ENCODE measurements at regions of chr3 and their contacts with region 1.

Region 1: GRCh38 chr3:72082186-72082715 is 297.3 kb upstream of the PROK2 start:
- DNase-seq: no peak
- ATAC-seq: peak; percentile 81
- H3K4me3 Mint-ChIP-seq: peak overlapping the region; percentile 72
- H3K27ac Mint-ChIP-seq: peak overlapping the region; percentile 71
- H3K4me1 Mint-ChIP-seq: peaks cover 71% of the 10 kb centered on the region
- H3K27me3 Mint-ChIP-seq: peaks cover 12% of the 10 kb centered on the region
- CTCF ChIP-seq: no peak

Region 2: DNA sequence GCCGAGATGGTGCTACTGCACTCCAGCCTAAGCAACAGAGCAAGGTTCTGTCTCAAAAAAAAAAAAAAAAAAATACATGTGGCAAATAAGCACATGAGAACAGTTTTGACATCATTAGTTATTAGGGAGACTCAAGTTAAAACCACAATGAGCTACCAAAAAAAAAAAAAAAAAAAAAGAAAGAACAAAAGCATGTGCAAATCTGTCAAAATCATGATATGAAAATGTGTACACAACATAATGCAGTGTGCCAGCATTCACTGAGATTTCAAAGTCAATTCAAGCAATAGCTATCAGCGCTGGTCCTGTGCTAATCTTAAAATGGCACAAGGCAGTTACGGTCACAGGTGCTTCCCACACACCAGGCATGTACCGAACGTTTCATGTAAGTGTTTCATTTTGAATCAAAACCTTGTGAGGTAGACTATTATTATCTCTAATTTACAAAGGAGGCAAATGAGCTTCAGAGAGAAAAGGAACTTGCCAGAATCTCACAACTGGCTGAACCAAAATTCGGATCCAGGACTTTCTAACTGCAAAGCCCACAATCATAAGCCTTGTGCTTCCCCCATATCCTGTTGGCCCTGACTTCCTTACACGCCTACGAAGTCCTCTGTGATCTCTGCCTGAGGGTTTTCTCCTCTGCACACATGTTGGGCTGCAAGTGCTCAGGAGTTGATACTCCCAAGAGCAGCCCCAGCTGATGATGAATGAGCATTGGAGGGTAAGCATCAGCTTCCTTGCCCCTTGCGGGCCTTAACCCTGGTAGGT is 97.2 kb before region 1 on chr3:
- CTCF ChIA-PET with region 1: no interaction called
- POLR2A ChIA-PET with region 1: no interaction called
- intact Hi-C with region 1: loop called (anchors 2 kb)
- DNase-seq: no peak
- ATAC-seq: peak; percentile 72
- H3K4me3 Mint-ChIP-seq: peak overlapping the region; percentile 62
- H3K27ac Mint-ChIP-seq: no peak overlapping the region
- H3K4me1 Mint-ChIP-seq: peaks cover 56% of the 10 kb centered on the region
- H3K27me3 Mint-ChIP-seq: peaks cover 17% of the 10 kb centered on the region
- CTCF ChIP-seq: no peak

Region 3: GRCh38 chr3:72092778-72093177 is 10.5 kb after region 1 on chr3:
- CTCF ChIA-PET with region 1: no interaction called
- POLR2A ChIA-PET with region 1: interaction called, 4 read pairs
- intact Hi-C with region 1: loop called (anchors 1 kb)
- DNase-seq: no peak
- ATAC-seq: no peak
- H3K4me3 Mint-ChIP-seq: no peak overlapping the region
- H3K27ac Mint-ChIP-seq: peak overlapping the region; percentile 15
- H3K4me1 Mint-ChIP-seq: peaks cover 44% of the 10 kb centered on the region
- H3K27me3 Mint-ChIP-seq: peaks cover 4% of the 10 kb centered on the region
- CTCF ChIP-seq: no peak

Region 4: DNA sequence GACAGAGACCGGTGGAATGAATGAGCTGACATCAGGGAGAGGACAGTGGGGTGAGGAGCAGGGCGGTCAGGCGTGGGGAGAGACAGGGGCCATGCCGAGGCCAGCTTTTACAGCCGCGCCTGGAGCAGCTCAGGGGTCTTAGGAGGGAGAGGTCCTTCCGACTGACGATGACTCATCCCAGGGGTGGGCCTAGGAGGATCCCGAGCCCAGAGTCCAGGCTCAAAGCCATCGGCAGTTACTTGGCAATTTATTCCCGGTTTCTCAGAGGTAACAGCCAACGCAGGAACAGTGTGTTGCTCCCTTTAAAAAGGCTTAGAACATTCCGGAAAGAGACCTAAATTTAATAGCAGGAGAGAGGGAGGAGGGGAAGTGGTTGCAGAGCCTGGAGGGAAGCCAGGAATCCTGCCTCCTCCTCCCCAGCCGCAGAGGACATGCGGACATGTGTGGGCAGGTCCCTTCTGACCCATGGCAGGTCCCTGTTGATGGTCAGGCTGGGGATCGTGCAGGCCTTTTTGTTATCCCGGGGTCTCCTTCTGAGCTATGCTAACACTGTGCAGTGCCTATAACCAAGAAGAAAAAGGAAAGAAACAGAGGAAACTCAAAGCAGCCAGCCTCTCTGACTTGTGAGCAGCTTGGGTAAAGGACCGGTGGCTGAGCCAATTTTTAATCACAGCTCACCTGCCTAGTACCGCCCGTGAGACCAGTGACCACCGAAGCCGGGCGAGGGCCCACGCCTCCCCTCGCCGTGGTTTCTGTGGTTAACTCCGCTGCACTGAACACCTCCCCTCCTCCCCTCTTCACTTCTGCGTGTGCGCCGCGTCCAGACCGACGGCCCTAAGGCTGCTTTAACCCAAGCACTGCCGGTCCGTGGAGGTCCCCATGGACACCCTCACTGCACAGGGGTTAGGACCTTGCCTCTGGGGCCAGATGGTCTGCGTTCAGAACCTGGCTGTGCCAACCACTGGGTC is 95.1 kb after region 1 on chr3:
- CTCF ChIA-PET with region 1: no interaction called
- POLR2A ChIA-PET with region 1: no interaction called
- intact Hi-C with region 1: loop called (anchors 5 kb)
- DNase-seq: peak; percentile 35
- ATAC-seq: peak; percentile 20
- H3K4me3 Mint-ChIP-seq: peak overlapping the region; percentile 79
- H3K27ac Mint-ChIP-seq: peak overlapping the region; percentile 75
- H3K4me1 Mint-ChIP-seq: peaks cover 64% of the 10 kb centered on the region
- H3K27me3 Mint-ChIP-seq: peaks cover 2% of the 10 kb centered on the region
- CTCF ChIP-seq: no peak

Region 5: DNA sequence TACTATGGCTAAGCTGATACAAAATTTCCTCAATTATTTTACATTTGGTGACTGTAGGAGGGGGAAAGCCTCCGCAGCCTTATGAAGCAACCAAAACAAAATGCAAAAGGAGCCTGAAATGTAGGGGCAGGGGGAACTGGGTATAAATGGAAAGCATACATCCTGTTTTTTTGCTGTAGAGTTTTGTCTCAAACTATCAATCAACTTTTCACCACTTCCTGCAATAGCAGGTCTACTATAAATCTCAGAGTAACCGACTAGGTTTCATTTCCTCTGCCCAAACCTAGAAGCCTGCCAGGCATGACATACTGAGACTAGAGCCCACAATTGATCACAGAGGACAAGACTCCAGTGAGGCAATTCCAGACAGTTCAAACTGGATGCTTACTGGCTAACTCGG is 674.6 kb after region 1 on chr3:
- CTCF ChIA-PET with region 1: no interaction called
- POLR2A ChIA-PET with region 1: no interaction called
- intact Hi-C with region 1: loop called (anchors 5 kb)
- DNase-seq: no peak
- ATAC-seq: peak; percentile 99
- H3K4me3 Mint-ChIP-seq: peak overlapping the region; percentile 67
- H3K27ac Mint-ChIP-seq: no peak overlapping the region
- H3K4me1 Mint-ChIP-seq: peaks cover 32% of the 10 kb centered on the region
- H3K27me3 Mint-ChIP-seq: peaks cover 33% of the 10 kb centered on the region
- CTCF ChIP-seq: no peak

Measured in activated B cell treated with CpG ODN at 0.5 μM for 24 hours (primary cell).